ENCODE measurements at regions of chr22 and their contacts with region 1.

Region 1: DNA sequence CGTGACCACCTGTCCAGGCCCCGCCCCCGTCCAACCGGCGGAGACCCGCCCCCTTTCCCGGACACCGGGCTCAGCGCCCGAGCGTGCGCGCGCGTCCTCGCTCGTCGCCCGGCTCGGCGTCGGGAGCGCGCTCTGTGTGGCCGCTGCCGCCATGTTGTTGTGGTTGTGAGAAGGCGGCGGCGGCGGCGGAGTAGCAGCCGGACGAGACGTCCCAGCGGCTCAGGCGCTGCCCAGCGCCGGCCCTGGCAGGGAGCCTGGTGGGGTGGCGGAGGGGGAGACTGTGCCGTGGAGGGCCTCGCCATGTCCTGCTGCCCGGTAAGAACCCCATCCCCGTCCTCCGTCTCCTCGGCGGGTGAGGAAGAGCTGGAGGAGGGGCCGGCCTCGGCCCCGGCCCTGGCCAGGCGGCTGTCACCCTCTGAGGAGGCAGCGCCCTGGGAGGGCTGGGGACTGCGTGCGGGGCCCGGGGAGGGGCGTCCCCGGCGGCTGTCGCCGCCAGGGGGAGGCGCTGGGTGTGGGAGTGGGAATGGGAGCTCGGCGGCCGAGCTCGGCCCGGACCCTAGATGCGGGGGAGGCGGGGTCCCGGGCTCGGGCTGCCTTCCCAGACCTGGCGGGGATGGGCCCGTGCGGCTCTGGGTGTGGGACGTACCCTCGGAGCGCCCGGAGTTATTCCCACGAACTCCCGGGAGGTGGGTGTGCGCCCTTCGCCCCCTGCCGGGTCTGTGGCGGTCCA is at the start of gene MTMR3:
- DNase-seq: peak; percentile 98
- ATAC-seq: peak; percentile 82
- H3K4me3 Mint-ChIP-seq: peak within 1 kb of the TSS; percentile 92
- H3K27ac Mint-ChIP-seq: peak within 1 kb of the TSS; percentile 83
- H3K4me1 Mint-ChIP-seq: peaks cover 10% of the 10 kb centered on the region
- H3K27me3 Mint-ChIP-seq: peaks cover 3% of the 10 kb centered on the region
- CTCF ChIP-seq: no peak
- total RNA-seq, gene MTMR3: 34.8 and 36.6 TPM in 2 replicates

Region 2: GRCh38 chr22:28976588-28976987 is 906.6 kb before region 1 on chr22:
- CTCF ChIA-PET with region 1: no interaction called
- POLR2A ChIA-PET with region 1: no interaction called
- intact Hi-C with region 1: no loop called
- DNase-seq: no peak
- ATAC-seq: no peak
- H3K4me3 Mint-ChIP-seq: no peak overlapping the region
- H3K27ac Mint-ChIP-seq: no peak overlapping the region
- H3K4me1 Mint-ChIP-seq: no peaks in the 10 kb centered on the region
- H3K27me3 Mint-ChIP-seq: peaks cover 23% of the 10 kb centered on the region
- CTCF ChIP-seq: no peak

Region 3: GRCh38 chr22:29695129-29695926 is 187.9 kb before region 1 on chr22:
- CTCF ChIA-PET with region 1: no interaction called
- POLR2A ChIA-PET with region 1: no interaction called
- intact Hi-C with region 1: no loop called
- DNase-seq: no peak
- ATAC-seq: no peak
- H3K4me3 Mint-ChIP-seq: no peak overlapping the region
- H3K27ac Mint-ChIP-seq: no peak overlapping the region
- H3K4me1 Mint-ChIP-seq: no peaks in the 10 kb centered on the region
- H3K27me3 Mint-ChIP-seq: no peaks in the 10 kb centered on the region
- CTCF ChIP-seq: no peak

Region 4: DNA sequence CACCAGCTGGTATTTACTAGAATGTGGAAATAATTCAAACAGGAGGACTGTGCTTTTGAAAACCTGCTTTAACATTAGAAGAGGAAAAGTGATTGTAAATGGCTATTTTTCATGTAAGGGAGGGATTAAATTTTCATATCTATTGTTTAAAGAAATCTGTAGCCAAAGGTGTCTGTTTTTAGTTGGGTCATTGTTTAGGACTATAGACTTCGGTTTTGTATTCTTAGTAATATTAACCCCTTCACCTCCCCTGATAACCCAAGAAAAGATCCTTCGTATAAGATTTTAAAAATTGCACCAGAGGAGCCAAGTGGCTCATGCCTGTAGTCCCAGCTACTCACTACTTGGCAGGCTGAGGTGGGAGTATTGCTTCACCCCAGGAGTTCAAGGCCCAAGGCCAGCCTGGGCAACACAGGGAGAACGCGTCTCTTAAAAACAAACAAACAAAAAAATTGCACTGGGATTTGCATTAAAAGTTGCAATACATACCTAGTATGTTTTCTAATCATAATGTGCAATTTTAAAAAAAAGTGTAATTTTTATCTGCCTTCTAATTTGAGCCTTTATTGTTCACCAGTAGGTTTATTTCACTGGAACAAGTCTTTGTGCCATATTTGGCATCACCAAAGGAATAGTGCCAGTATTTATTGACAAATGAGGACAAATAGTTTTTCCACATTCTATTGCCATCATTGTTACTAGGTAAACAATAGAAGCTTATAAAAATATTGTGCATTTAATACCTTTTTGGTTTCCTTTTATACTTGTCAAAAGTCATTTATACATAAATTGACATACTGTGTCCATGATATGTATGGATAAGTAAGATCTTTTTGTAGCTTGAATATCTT is 34.1 kb after region 1 on chr22:
- CTCF ChIA-PET with region 1: no interaction called
- POLR2A ChIA-PET with region 1: no interaction called
- intact Hi-C with region 1: loop called (anchors 5 kb)
- DNase-seq: no peak
- ATAC-seq: no peak
- H3K4me3 Mint-ChIP-seq: no peak overlapping the region
- H3K27ac Mint-ChIP-seq: no peak overlapping the region
- H3K4me1 Mint-ChIP-seq: peaks cover 70% of the 10 kb centered on the region
- H3K27me3 Mint-ChIP-seq: no peaks in the 10 kb centered on the region
- CTCF ChIP-seq: no peak

Region 5: GRCh38 chr22:29937940-29938693 is 54.9 kb after region 1 on chr22:
- CTCF ChIA-PET with region 1: no interaction called
- POLR2A ChIA-PET with region 1: interaction called, 3 read pairs
- intact Hi-C with region 1: loop called (anchors 1 kb)
- DNase-seq: no peak
- ATAC-seq: peak; percentile 88
- H3K4me3 Mint-ChIP-seq: peak overlapping the region; percentile 80
- H3K27ac Mint-ChIP-seq: peak overlapping the region; percentile 87
- H3K4me1 Mint-ChIP-seq: peaks cover 45% of the 10 kb centered on the region
- H3K27me3 Mint-ChIP-seq: no peaks in the 10 kb centered on the region
- CTCF ChIP-seq: no peak

Region 6: DNA sequence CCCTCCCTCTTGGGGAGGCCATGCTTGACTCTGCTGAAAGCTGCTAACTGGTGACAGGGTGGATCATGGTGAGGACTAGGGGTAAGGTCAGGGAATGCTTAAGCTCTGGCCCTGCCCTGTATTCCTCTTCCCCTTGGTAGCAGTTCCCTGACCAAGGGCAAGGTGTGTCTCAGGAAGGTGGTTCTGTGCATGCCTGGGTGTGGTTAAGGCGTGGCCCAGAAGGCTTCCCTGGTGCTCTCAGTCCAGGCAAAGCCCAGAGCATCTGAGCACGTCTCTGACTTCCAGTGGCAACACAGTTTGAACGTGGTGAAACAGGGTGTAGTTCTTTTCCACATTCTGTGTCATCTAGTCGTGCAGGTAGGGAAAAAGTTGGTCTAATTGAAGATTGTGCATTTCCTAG is 144.0 kb after region 1 on chr22:
- CTCF ChIA-PET with region 1: no interaction called
- POLR2A ChIA-PET with region 1: no interaction called
- intact Hi-C with region 1: no loop called
- DNase-seq: no peak
- ATAC-seq: no peak
- H3K4me3 Mint-ChIP-seq: no peak overlapping the region
- H3K27ac Mint-ChIP-seq: no peak overlapping the region
- H3K4me1 Mint-ChIP-seq: no peaks in the 10 kb centered on the region
- H3K27me3 Mint-ChIP-seq: no peaks in the 10 kb centered on the region
- CTCF ChIP-seq: no peak

Measured in activated B cell treated with CpG ODN at 0.5 μM for 24 hours (primary cell).